ENCODE measurements at regions of chr12 and their contacts with region 1.

Region 1: GRCh38 chr12:51823875-51824565 is 24.5 kb downstream of the FIGNL2 start:
- DNase-seq: peak; percentile 81
- H3K4me3 Mint-ChIP-seq: no peak overlapping the region
- H3K27ac Mint-ChIP-seq: no peak overlapping the region
- H3K4me1 Mint-ChIP-seq: peaks cover 12% of the 10 kb centered on the region
- H3K27me3 Mint-ChIP-seq: peaks cover 12% of the 10 kb centered on the region
- CTCF ChIP-seq: peak; percentile 72

Region 2: GRCh38 chr12:51419425-51420208 is 404.4 kb before region 1 on chr12:
- CTCF ChIA-PET with region 1: interaction called, 77 read pairs
- POLR2A ChIA-PET with region 1: interaction called, 5 read pairs
- intact Hi-C with region 1: loop called (anchors 1 kb)
- DNase-seq: no peak
- H3K4me3 Mint-ChIP-seq: no peak overlapping the region
- H3K27ac Mint-ChIP-seq: no peak overlapping the region
- H3K4me1 Mint-ChIP-seq: no peaks in the 10 kb centered on the region
- H3K27me3 Mint-ChIP-seq: no peaks in the 10 kb centered on the region
- CTCF ChIP-seq: no peak

Region 3: GRCh38 chr12:51521554-51522276 is 302.3 kb before region 1 on chr12:
- CTCF ChIA-PET with region 1: interaction called, 10 read pairs
- POLR2A ChIA-PET with region 1: no interaction called
- intact Hi-C with region 1: no loop called
- DNase-seq: no peak
- H3K4me3 Mint-ChIP-seq: no peak overlapping the region
- H3K27ac Mint-ChIP-seq: no peak overlapping the region
- H3K4me1 Mint-ChIP-seq: peaks cover 5% of the 10 kb centered on the region
- H3K27me3 Mint-ChIP-seq: no peaks in the 10 kb centered on the region
- CTCF ChIP-seq: no peak

Region 4: DNA sequence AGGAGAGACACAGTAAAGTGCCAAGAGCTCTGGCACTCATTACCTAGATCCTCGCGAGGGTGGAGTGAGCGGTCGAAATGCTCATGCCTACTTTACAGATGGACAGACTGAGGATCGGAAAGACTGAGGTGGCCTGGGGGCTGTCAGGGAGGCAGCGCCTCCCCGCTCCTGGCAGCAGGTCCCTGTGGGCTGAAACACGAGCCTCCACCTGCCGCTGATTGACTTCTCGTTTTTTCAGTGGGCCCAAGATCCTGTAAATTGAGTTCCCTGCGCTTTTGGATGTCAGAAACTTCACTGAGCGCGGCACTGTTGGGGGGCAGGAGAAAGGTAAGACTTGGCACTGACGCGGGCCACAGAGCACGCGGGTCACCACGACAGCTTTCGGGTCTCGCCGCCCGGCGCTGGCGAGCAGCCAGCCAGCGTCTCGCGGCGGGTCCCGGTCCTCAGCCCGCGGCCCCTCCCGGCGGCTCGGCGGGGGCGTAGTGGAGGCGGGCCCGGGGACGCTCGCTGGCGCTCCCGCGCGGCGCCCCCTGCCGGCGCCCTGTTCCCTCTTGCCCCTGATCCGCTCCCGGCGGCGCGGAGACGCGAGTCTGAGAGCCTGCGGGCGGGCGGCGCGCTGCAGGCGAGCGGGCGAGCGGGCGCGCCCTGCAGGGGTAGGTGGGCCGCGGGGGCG is 233.5 kb before region 1 on chr12:
- CTCF ChIA-PET with region 1: interaction called, 7 read pairs
- POLR2A ChIA-PET with region 1: no interaction called
- intact Hi-C with region 1: loop called (anchors 5 kb)
- DNase-seq: peak; percentile 44
- H3K4me3 Mint-ChIP-seq: peak overlapping the region; percentile 69
- H3K27ac Mint-ChIP-seq: no peak overlapping the region
- H3K4me1 Mint-ChIP-seq: peaks cover 4% of the 10 kb centered on the region
- H3K27me3 Mint-ChIP-seq: peaks cover 85% of the 10 kb centered on the region
- CTCF ChIP-seq: peak; percentile 72

Region 5: DNA sequence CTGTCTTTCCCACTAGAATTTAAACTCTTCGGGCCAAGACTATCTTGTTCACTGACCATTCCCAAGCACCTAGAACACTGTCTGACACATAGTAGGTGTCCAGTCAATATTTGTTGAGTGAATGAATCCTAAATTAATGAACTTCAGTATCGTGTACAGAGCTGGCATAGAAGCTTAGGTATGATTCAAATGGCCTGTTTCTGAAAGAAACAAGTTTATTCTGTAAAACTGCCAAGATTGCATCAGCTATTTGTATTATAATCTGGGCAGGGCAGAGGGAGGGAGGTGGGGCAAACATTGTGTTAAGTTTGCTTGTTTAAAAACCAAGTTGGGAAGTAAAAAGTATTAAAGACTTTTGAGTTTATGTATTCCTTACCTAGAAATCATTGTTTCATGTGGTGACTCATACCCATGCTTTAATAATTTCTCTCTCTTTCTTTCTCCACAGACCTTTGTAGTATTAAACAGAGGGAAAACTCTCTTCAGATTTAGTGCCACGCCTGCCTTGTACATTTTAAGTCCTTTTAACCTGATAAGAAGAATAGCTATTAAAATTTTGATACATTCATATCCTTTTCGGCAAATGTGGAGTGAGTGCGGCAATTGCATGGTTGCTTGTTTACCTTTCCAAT is 140.2 kb before region 1 on chr12:
- CTCF ChIA-PET with region 1: interaction called, 9 read pairs
- POLR2A ChIA-PET with region 1: interaction called, 12 read pairs
- intact Hi-C with region 1: loop called (anchors 5 kb)
- DNase-seq: peak; percentile 85
- H3K4me3 Mint-ChIP-seq: no peak overlapping the region
- H3K27ac Mint-ChIP-seq: no peak overlapping the region
- H3K4me1 Mint-ChIP-seq: peaks cover 33% of the 10 kb centered on the region
- H3K27me3 Mint-ChIP-seq: peaks cover 19% of the 10 kb centered on the region
- CTCF ChIP-seq: no peak

Region 6: GRCh38 chr12:51759175-51759574 is 64.8 kb before region 1 on chr12:
- CTCF ChIA-PET with region 1: no interaction called
- POLR2A ChIA-PET with region 1: no interaction called
- intact Hi-C with region 1: no loop called
- DNase-seq: peak; percentile 27
- H3K4me3 Mint-ChIP-seq: no peak overlapping the region
- H3K27ac Mint-ChIP-seq: no peak overlapping the region
- H3K4me1 Mint-ChIP-seq: no peaks in the 10 kb centered on the region
- H3K27me3 Mint-ChIP-seq: no peaks in the 10 kb centered on the region
- CTCF ChIP-seq: no peak

Region 7: DNA sequence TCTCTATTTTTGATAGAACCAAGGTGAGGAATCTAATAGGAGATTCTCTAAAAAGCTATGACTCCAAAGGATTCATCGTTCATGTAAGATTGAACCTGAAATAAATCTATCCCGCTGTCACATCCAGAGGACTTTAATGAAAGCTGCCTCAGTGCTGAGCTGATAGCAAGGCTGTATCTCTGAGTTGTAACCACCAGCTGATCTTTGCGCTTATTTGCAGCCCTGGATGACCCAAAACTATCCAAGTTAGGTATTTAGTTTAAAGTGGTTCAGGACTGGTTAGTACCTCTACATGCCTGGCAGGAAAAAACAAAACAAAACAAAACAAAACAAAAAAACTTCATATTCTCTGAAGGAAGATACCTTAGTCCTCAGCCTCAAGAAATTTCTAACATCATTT is 55.1 kb after region 1 on chr12:
- CTCF ChIA-PET with region 1: interaction called, 10 read pairs
- POLR2A ChIA-PET with region 1: no interaction called
- intact Hi-C with region 1: loop called (anchors 5 kb)
- DNase-seq: no peak
- H3K4me3 Mint-ChIP-seq: no peak overlapping the region
- H3K27ac Mint-ChIP-seq: no peak overlapping the region
- H3K4me1 Mint-ChIP-seq: no peaks in the 10 kb centered on the region
- H3K27me3 Mint-ChIP-seq: no peaks in the 10 kb centered on the region
- CTCF ChIP-seq: no peak